ENCODE measurements at regions of chr3 and their contacts with region 1.

Region 1: DNA sequence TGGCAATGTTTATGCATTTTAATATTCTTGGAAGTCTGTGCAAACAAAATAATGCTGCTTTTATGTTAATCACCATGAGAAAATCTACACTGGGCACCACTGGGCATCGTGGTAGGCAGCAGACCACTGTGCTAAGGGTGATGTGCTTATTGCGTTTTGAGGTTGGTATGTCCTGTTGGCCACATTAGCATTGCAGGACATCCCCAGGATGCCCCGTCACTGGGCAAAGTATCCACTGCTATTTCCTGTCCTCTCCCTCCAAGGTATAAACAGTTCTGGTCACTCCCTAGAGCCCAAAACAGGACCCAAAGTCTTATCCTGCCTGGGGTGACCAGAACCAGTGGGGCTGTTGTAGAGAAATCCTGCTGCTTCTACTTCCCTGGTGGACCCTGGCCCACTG is 284.2 kb upstream of the ROPN1 start:
- DNase-seq: no peak
- ATAC-seq: peak in 4 of 8 donors; percentile 1 to 30 (median 6)
- H3K4me3 ChIP-seq: no peak overlapping the region
- H3K27ac ChIP-seq: peak overlapping the region; percentile 80 to 94 (median 86)
- H3K4me1 ChIP-seq: peaks cover 26 to 92% (median 56%) of the 10 kb centered on the region in 9 donors
- H3K27me3 ChIP-seq: no peaks in the 10 kb centered on the region
- CTCF ChIP-seq: no peak

Region 2: GRCh38 chr3:124248471-124249028 is 27.6 kb before region 1 on chr3:
- intact Hi-C with region 1: loop called in 4 of 10 experiments (anchors 1 to 2 kb)
- DNase-seq: peak; percentile 52 to 69
- ATAC-seq: peak; percentile 60 to 91 (median 89)
- H3K4me3 ChIP-seq: peak overlapping the region in 1 of 10 donors; percentile 16
- H3K27ac ChIP-seq: peak overlapping the region; percentile 77 to 98 (median 87)
- H3K4me1 ChIP-seq: peaks cover 22 to 58% (median 30%) of the 10 kb centered on the region in 9 donors
- H3K27me3 ChIP-seq: no peaks in the 10 kb centered on the region
- CTCF ChIP-seq: no peak

Measured in heart right ventricle (tissue), 16 donors.